Gastrocnemius medialis (tissue), 4 donors: ENCODE measurements at regions of chr1 and their contacts with region 1.

Region 1: DNA sequence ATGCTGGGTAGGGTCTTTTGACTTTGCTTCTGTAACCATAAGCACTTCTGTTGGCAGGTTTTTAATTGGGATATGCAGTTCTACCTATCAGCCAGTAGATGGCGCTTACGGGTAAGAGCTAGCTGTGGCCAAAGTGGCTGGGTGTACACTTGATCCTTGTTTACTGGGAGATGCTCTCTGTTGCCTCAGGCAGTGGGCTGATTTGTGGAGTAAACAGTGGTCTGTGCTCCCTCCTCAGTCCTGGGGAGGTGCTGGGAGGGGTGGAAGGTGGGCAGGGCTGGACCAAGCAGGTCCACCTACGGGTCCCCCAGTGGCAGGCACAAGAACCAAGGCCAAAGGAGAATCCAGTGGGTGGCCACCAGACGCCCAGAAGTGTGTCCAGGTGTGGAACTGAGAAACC is 43.4 kb downstream of the RALGPS2 start:
- DNase-seq: no peak
- ATAC-seq: peak; percentile 42 to 64
- H3K4me3 ChIP-seq: no peak overlapping the region
- H3K27ac ChIP-seq: no peak overlapping the region
- H3K4me1 ChIP-seq: no peaks in the 10 kb centered on the region
- H3K27me3 ChIP-seq: no peaks in the 10 kb centered on the region
- CTCF ChIP-seq: peak; percentile 49 to 81 (median 70)
- POLR2A ChIP-seq: no peak

Region 2: GRCh38 chr1:179217943-179218507 is 449.6 kb after region 1 on chr1:
- in situ Hi-C with region 1: loop called in 1 of 4 experiments (anchors 25 kb)
- intact Hi-C with region 1: no loop called
- DNase-seq: no peak
- ATAC-seq: no peak
- H3K4me3 ChIP-seq: no peak overlapping the region
- H3K27ac ChIP-seq: peak overlapping the region in 2 of 4 donors; percentile 25 to 33
- H3K4me1 ChIP-seq: peaks cover 0 to 3% of the 10 kb centered on the region in 2 donors
- H3K27me3 ChIP-seq: no peaks in the 10 kb centered on the region
- CTCF ChIP-seq: no peak
- POLR2A ChIP-seq: no peak

Region 3: DNA sequence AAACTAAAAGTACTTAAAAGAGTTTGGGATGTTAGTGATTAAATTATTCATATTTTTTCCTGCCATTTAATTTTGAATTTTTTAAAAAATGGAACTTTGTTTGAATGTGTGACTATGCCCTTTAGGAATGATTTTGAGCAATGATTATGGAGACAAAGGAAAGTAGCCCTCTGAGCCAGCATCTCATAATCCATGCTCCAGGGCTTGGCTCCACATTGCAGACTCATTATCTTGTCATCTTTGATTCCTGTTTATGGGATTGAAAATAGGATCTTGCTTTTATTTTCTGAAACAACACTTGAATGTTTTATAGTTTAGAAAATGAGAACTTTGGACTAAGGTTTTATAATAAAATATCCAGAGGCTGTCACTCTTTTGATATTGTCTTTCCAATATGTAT is 611.9 kb after region 1 on chr1:
- in situ Hi-C with region 1: loop called in 1 of 4 experiments (anchors 25 kb)
- intact Hi-C with region 1: no loop called
- DNase-seq: no peak
- ATAC-seq: no peak
- H3K4me3 ChIP-seq: no peak overlapping the region
- H3K27ac ChIP-seq: no peak overlapping the region
- H3K4me1 ChIP-seq: no peaks in the 10 kb centered on the region
- H3K27me3 ChIP-seq: no peaks in the 10 kb centered on the region
- CTCF ChIP-seq: no peak
- POLR2A ChIP-seq: no peak